SK-N-SH (cell line): ENCODE measurements at regions of chrX and their contacts with region 1.

Region 1: DNA sequence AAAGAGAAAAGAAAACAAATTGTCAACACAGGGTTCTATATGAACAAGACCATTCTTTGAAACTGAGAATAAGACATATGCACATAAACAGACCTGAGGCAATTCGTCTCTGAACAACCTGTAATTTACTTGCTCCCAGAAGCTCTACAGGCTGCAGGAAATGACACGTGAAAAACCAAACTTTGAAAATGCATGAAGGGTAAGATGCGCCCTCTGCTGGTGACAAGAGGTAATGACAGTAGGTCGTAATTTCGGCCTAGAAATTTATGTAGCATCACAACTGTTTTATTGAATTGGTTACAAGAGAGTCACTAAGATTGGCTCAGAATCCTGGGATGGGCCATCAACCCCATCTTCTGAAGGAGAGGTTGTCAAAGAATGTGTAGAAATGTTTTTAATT is 276.5 kb downstream of the PPP4R3C start:
- DNase-seq: peak; percentile 18
- H3K4me3 ChIP-seq: no peak overlapping the region; a peak in 1 of 4 replicates
- H3K27ac ChIP-seq: no peak overlapping the region
- H3K4me1 ChIP-seq: no peaks in the 10 kb centered on the region
- H3K27me3 ChIP-seq: no peaks in the 10 kb centered on the region
- CTCF ChIP-seq: peak; percentile 90
- EP300 ChIP-seq: no peak
- RAD21 ChIP-seq: peak; percentile 67

Region 2: GRCh38 chrX:26783512-26784225 is 403.0 kb before region 1 on chrX:
- CTCF ChIA-PET with region 1: interaction called, 17 read pairs
- POLR2A ChIA-PET with region 1: no interaction called
- DNase-seq: peak; percentile 14
- H3K4me3 ChIP-seq: no peak overlapping the region
- H3K27ac ChIP-seq: no peak overlapping the region
- H3K4me1 ChIP-seq: no peaks in the 10 kb centered on the region; a peak in 1 of 4 replicates
- H3K27me3 ChIP-seq: no peaks in the 10 kb centered on the region
- CTCF ChIP-seq: peak; percentile 67
- EP300 ChIP-seq: no peak
- RAD21 ChIP-seq: peak; percentile 80

Region 3: DNA sequence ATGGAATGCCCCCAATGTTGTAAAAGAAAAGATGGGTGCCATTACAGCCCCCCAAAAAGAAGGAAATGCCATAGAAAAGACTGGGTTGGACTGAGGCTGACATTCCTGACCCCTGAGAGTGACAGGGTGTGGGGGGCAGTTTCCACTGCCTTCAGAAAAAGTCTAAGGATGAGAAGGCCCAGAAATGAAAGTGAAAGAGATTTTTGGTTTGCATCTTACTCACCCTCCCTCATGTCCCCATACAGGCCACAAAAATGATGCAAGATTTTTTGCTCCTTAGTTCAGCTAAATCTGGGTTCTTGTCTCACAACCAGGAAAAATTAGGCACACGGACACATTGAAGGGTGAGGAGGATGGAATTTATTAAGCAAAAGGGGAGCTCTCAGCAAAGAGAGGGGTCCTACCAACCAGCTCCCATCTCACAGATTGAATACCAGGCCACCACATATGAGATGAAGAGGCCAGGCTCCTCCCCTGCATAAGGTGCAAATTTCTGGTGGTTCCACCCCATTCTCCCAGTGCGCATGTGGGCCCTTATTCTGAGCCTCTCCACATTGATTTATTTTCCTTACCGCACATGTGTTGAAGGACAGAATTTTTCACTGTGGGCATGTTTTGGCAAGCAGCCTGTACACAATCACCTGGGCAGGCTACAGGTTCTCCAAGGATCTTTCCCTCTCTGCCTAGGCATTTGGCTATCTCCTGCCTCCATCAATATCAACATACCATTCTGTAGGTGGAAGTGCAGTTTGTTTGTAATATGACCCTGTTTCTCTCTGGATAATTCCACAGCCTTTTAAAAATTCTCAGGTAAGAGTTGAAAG is 257.6 kb after region 1 on chrX:
- CTCF ChIA-PET with region 1: no interaction called
- POLR2A ChIA-PET with region 1: no interaction called
- DNase-seq: no peak
- H3K4me3 ChIP-seq: no peak overlapping the region
- H3K27ac ChIP-seq: no peak overlapping the region
- H3K4me1 ChIP-seq: no peaks in the 10 kb centered on the region
- H3K27me3 ChIP-seq: no peaks in the 10 kb centered on the region; the same call in 1 of the 2 replicates
- CTCF ChIP-seq: no peak
- EP300 ChIP-seq: no peak
- RAD21 ChIP-seq: no peak